IMR-90 (cell line): ENCODE measurements at regions of chr15 and their contacts with region 1.

Region 1: GRCh38 chr15:55993111-55993803 is at the start of gene NEDD4:
- DNase-seq: peak; percentile 86
- ATAC-seq: peak; percentile 96
- H3K4me3 ChIP-seq: peak within 1 kb of the TSS; percentile 86
- H3K27ac ChIP-seq: peak within 1 kb of the TSS; percentile 96
- H3K4me1 ChIP-seq: peaks cover 4% of the 10 kb centered on the region
- H3K27me3 ChIP-seq: no peaks in the 10 kb centered on the region
- CTCF ChIP-seq: peak; percentile 61
- POLR2A ChIP-seq: no peak
- RAD21 ChIP-seq: no peak; the same call in 1 of the 2 replicates
- total RNA-seq, gene NEDD4: 80.7 and 106 TPM in 2 replicates

Region 2: GRCh38 chr15:55846116-55846707 is 147.0 kb before region 1 on chr15:
- CTCF ChIA-PET with region 1: no interaction called
- POLR2A ChIA-PET with region 1: no interaction called
- dilution Hi-C with region 1: no loop called
- in situ Hi-C with region 1: no loop called
- intact Hi-C with region 1: loop called (anchors 5 kb)
- DNase-seq: peak; percentile 88
- ATAC-seq: peak; percentile 97
- H3K4me3 ChIP-seq: no peak overlapping the region
- H3K27ac ChIP-seq: no peak overlapping the region
- H3K4me1 ChIP-seq: no peaks in the 10 kb centered on the region
- H3K27me3 ChIP-seq: no peaks in the 10 kb centered on the region
- CTCF ChIP-seq: peak; percentile 87
- POLR2A ChIP-seq: no peak
- RAD21 ChIP-seq: peak; percentile 68

Region 3: DNA sequence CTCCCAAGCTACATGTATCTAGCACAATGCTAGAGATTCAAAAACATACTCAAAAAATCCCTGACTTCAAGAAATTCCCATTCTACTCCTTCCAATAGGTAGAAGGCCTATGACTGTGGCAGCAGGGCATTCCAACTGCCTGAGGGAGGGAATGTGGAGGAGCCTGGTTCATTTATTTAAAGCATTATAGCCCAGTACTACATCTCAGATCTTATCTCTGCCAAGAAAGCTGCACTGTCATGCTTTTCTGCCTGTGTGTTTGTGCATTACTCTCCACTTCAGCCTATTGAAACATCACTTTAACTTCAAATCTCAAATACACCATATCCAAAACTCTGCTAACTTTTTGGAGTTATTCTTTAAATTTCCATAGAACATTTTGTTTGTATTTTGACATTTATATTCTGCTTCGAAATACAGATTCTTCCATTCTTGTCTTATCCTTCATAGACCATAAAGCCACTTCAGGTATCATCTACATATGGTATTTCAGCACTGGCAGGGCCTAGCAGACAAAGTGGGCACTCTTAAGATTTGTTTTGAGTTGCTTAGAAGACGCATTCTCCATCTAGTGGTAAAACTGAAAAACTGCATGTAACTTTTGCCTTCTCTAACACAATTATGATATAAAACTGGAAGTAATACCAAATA is 59.3 kb after region 1 on chr15:
- CTCF ChIA-PET with region 1: no interaction called
- POLR2A ChIA-PET with region 1: no interaction called
- dilution Hi-C with region 1: no loop called
- in situ Hi-C with region 1: no loop called
- intact Hi-C with region 1: loop called (anchors 2 kb)
- DNase-seq: peak; percentile 68
- ATAC-seq: peak; percentile 90
- H3K4me3 ChIP-seq: no peak overlapping the region
- H3K27ac ChIP-seq: no peak overlapping the region
- H3K4me1 ChIP-seq: peaks cover 7% of the 10 kb centered on the region
- H3K27me3 ChIP-seq: no peaks in the 10 kb centered on the region
- CTCF ChIP-seq: peak; percentile 74
- POLR2A ChIP-seq: no peak
- RAD21 ChIP-seq: peak; percentile 71

Region 4: DNA sequence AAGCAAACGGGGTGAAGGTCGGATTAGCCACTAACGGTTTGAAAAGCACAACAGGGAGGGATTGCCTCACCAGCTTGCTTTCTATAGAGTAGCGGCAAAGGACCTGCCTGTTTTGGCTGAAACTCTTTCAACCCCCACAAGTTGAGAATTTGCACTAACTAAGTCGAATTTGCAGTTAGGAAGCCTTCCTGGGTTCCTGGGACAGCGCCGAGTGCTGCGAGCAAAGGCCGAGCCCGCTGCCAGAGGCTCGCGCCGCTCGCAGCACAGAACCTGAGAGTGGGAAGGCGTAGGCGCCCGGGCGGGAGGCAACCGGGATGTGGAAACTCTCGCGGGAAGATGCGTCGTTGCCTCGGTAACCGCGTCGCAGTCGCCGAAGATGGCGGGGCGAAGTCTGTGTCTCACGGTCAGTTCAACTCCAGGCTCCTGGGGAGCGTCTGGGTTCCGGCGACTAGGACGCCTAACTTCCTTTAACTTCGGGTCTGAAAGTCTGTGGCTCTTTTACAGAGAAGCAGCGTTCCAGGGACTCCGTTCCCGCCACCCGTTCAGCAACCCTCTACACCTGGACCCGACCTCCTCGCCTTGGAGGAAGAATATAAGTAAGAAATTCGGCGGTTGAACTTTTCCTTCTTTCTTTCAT is 371.9 kb after region 1 on chr15 and contains the start of gene TEX9:
- CTCF ChIA-PET with region 1: no interaction called
- POLR2A ChIA-PET with region 1: no interaction called
- dilution Hi-C with region 1: no loop called
- in situ Hi-C with region 1: no loop called
- intact Hi-C with region 1: loop called (anchors 5 kb)
- DNase-seq: peak; percentile 80
- ATAC-seq: peak; percentile 99
- H3K4me3 ChIP-seq: peak within 1 kb of the TSS; percentile 66
- H3K27ac ChIP-seq: peak within 1 kb of the TSS; percentile 25
- H3K4me1 ChIP-seq: no peaks in the 10 kb centered on the region
- H3K27me3 ChIP-seq: no peaks in the 10 kb centered on the region
- CTCF ChIP-seq: no peak
- POLR2A ChIP-seq: no peak
- RAD21 ChIP-seq: no peak
- total RNA-seq, gene TEX9: 1.4 and 2.5 TPM in 2 replicates